ENCODE measurements at regions of chr1 and their contacts with region 1.

Region 1: DNA sequence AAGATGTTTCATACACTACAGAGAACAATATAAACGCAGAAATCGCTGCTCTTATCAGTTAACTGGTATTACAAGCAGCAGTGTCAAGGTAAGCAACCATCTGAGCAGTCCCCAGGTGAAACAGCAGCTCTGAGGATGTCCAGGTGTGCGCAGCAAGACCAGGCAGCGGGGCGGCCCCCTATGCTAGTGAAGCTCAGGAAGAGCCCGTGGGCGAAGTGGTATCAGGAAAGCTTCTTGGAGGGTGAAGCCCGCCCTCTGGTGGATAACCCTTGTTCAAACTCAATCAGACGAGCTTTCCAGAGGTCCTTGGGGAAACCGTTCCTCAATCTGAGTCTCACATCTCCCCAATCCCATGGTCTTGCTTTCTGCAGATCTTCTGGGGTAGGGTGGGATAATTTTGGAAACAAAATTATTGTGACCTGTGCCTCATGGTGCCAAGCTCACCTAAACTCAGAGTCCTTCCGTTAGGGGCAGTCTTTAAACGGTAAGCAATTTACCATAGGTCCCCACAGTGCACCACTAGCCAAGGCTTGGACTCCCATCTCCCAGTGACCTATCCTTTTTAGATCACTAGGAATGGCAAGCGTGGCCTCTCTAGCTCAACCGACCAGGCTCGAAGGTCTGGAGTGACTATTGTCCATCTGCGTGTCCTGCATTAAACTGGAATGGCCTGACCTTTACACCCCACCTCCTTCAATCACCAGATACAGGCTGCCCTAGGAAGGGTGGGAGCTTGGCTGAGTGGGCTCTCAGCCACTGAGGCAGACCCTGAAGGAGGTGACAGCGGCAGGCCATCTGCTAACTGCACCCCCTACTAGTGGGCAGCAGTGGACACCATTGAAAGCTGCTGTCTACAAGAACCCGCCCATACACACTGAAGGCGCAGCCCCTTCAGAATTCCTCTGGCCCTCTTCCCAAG is 13.6 kb upstream of the FAM110D start:
- DNase-seq: peak; percentile 77 to 83
- H3K4me3 ChIP-seq: no peak overlapping the region
- H3K27ac ChIP-seq: no peak overlapping the region
- H3K4me1 ChIP-seq: peaks cover 0 to 5% (median 0%) of the 10 kb centered on the region in 4 donors
- H3K27me3 ChIP-seq: peaks cover 0 to 31% of the 10 kb centered on the region in 2 donors
- CTCF ChIP-seq: peak; percentile 71 to 74

Region 2: DNA sequence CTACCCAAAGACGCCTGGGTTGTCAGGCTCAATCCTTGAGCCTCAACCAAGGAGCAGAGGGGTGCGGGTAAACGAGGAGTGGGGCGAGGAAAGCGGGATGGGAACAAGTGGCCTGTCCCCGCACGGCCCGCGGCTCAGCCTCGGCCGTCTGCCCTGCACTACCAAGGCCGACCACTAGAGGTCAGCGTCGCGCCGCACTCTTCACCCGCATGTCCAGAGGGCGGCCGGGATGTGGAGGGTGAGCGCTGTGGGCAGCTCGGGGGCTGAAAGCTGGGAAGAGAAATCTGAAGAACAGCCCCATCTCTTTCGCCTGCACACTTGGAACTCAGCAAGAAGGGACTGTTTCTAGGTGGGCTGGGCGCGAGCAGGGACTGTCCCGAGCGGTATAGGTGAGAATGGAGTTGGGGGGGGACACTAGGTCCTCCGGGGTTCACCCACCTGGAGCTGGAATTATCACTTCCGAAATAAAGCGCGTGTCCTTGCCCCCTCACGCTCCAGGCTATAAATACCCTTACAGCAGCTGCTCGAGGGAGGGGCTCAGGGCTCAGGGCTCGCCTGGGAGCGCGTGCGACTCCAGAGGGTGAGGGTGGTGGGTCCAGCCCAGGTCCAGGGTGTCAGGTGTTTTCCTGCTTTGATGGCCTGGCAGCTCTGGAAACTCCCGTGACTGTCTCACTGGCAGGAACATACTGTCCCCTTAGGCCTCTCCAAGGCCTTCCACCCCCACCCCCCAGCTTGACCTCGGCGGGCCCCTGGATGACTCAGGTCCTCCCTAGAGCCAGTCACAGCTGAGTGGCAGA is 109.1 kb before region 1 on chr1:
- intact Hi-C with region 1: loop called (anchors 5 kb)
- DNase-seq: peak; percentile 75 to 85
- H3K4me3 ChIP-seq: peak overlapping the region; percentile 70 to 81
- H3K27ac ChIP-seq: peak overlapping the region; percentile 51 to 80
- H3K4me1 ChIP-seq: peaks cover 0 to 15% (median 10%) of the 10 kb centered on the region in 4 donors
- H3K27me3 ChIP-seq: peaks cover 0 to 22% of the 10 kb centered on the region in 2 donors
- CTCF ChIP-seq: peak; percentile 99 to 100

Region 3: DNA sequence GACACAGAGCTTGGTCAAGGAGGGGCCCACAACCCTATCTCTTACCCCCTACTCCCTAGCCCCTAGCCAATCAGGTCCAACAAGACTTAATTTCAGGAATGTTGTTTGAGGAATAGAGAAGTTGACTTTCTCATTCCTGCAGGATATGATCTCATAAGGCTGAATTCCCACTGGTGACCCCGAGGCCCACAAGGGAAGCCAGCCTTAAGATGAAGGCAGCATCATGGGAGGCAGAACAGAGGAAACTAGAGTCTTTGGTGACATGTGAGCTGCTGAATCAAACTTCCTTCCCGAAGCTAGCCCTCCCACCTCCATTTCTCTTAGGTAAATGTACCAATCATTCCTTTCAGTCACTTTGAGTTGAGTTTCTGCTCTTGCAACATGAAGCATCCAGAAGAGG is 42.8 kb before region 1 on chr1:
- intact Hi-C with region 1: loop called (anchors 5 kb)
- DNase-seq: peak in 1 of 2 donors; percentile 4
- H3K4me3 ChIP-seq: no peak overlapping the region
- H3K27ac ChIP-seq: no peak overlapping the region
- H3K4me1 ChIP-seq: no peaks in the 10 kb centered on the region
- H3K27me3 ChIP-seq: peaks cover 0 to 16% of the 10 kb centered on the region in 2 donors
- CTCF ChIP-seq: no peak

Region 4: DNA sequence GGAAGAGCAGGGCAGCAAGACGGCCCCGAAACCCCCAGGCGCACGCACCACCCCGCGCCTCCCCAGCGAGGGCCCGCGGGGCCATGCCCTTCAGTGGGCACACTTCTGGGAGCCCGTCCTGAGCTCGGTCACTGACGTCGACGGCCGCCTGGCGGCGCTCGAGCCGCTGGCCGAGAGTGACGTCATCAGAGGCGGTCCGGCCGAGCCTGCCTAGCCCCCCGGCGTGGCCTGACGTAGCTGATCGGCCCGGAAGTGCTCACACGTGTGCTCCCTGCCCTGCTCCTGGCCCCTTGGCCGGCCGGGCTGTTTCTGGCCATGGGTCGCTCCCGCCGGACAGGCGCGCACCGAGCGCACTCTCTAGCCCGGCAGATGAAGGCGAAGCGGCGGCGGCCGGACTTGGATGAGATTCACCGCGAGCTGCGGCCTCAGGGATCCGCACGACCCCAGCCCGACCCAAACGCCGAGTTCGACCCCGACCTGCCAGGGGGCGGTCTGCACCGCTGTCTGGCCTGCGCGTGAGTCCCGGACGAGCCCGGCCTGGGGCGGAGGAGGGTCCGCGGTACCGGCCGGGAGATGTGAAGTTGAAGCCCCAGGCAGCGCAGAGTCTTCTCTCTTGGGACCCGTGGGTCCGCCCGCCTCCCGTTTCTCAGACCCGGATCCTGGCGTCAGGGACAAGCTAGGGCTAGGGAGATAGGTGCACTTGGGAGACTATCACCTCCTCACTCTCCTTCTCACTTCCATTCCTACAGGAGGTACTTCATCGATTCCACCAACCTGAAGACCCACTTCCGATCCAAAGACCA is 24.6 kb after region 1 on chr1 and contains the start of gene ZNF593:
- intact Hi-C with region 1: loop called (anchors 1 kb)
- DNase-seq: peak; percentile 87 to 93
- H3K4me3 ChIP-seq: peak within 1 kb of the TSS; percentile 80
- H3K27ac ChIP-seq: peak within 1 kb of the TSS; percentile 64 to 79
- H3K4me1 ChIP-seq: peaks cover 0 to 21% (median 14%) of the 10 kb centered on the region in 4 donors
- H3K27me3 ChIP-seq: no peaks in the 10 kb centered on the region
- CTCF ChIP-seq: peak; percentile 89 to 94